ENCODE measurements at regions of chr5 and their contacts with region 1.

Region 1: DNA sequence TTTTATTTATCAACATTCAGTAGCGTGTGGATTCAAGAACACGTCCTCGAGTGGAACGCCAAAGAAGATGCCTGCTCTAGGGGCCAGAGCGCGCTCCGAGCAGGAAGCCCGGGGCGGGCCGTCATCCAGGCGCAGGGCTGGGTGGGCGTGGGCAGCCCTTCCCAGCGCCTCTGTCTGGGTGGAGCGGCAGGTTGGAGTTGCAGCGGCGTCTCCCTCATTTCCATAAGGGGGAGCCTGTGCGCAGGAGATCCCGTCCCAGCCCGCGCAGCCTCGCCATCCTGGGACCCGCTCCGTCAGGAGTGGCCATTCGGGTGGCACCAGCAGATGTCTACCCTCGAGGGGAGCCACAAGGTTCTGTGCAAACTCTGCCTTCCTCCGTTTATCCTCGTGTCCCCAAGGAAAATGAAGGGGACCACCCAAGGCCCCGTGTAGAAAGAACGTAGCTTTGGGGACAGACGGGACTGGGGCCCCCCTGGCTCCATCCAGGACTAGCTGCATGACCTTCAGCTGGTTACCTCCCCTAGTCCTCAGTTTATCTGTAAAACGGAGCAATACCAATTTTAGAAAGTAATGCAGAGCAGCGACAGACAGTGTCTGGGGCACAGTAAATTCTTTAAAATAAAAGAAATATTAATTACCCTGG is 155.5 kb upstream of the SMIM23 start:
- DNase-seq: peak; percentile 71 to 88
- ATAC-seq: peak; percentile 97 to 100
- H3K4me3 ChIP-seq: peak overlapping the region; percentile 50
- H3K27ac ChIP-seq: peak overlapping the region; percentile 44 to 45; a peak in 3 of 6 replicates
- H3K4me1 ChIP-seq: no peaks in the 10 kb centered on the region
- CTCF ChIP-seq: peak; percentile 59
- EP300 ChIP-seq: no peak
- POLR2A ChIP-seq: no peak
- RAD21 ChIP-seq: peak; percentile 78 to 81

Region 2: GRCh38 chr5:171614971-171615653 is 15.0 kb before region 1 on chr5:
- CTCF ChIA-PET with region 1: interaction called, 41 read pairs
- POLR2A ChIA-PET with region 1: no interaction called
- DNase-seq: no peak
- ATAC-seq: no peak
- H3K4me3 ChIP-seq: no peak overlapping the region
- H3K27ac ChIP-seq: no peak overlapping the region
- H3K4me1 ChIP-seq: no peaks in the 10 kb centered on the region
- CTCF ChIP-seq: no peak
- EP300 ChIP-seq: no peak
- POLR2A ChIP-seq: no peak
- RAD21 ChIP-seq: no peak

Region 3: GRCh38 chr5:171647032-171647903 is 17.1 kb after region 1 on chr5:
- CTCF ChIA-PET with region 1: interaction called, 27 read pairs
- POLR2A ChIA-PET with region 1: no interaction called
- DNase-seq: peak; percentile 45 to 55
- ATAC-seq: peak; percentile 88 to 91
- H3K4me3 ChIP-seq: no peak overlapping the region
- H3K27ac ChIP-seq: peak overlapping the region in 1 of 2 experiments; percentile 50; a peak in 2 of 6 replicates
- H3K4me1 ChIP-seq: peaks cover 7% of the 10 kb centered on the region; the same call in 1 of the 3 replicates
- CTCF ChIP-seq: no peak
- EP300 ChIP-seq: no peak
- POLR2A ChIP-seq: no peak
- RAD21 ChIP-seq: no peak

Region 4: DNA sequence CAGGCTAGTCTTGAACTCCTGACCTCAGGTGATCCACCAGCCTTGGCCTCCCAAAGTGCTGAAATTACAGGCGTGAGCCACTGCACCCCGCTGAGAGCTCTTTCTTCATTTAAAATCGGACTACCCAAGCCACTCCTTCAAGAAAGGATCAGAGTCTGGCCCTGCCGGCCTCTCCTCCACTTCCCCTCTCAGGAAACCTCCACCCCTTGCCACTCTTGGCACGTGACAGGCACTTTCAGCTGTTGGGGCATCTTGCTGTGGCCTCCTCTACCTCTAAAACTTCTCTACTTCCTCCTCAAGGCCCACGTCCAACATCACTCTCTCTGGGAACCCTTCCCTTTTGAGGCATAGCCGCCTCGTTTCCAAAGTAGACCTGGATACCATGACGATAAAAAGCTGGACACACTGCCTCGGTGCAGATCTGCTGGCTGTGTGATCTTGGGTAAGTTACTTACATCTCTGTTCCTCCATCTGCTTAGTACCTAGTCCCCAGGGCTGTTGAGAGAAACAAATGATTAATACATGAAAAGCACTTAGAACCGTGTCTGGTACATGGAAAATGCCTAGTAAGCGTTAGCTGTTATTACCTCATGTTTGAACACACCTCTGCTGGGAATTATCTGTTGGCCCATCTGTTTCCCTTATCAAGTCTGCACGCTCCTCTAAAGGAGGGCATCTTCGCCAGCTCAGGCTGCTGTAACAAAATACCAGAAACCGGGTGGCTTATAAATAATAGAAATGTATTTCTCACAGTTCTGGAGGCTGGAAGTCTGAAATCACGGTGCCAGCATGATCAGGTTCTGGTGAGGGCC is 210.8 kb after region 1 on chr5:
- CTCF ChIA-PET with region 1: interaction called, 13 read pairs
- POLR2A ChIA-PET with region 1: no interaction called
- DNase-seq: no peak
- ATAC-seq: no peak
- H3K4me3 ChIP-seq: no peak overlapping the region
- H3K27ac ChIP-seq: no peak overlapping the region
- H3K4me1 ChIP-seq: no peaks in the 10 kb centered on the region
- CTCF ChIP-seq: no peak
- EP300 ChIP-seq: no peak
- POLR2A ChIP-seq: no peak
- RAD21 ChIP-seq: no peak

Region 5: GRCh38 chr5:171898386-171898785 is 268.2 kb after region 1 on chr5:
- CTCF ChIA-PET with region 1: interaction called, 19 read pairs
- POLR2A ChIA-PET with region 1: no interaction called
- DNase-seq: no peak
- ATAC-seq: no peak
- H3K4me3 ChIP-seq: no peak overlapping the region
- H3K27ac ChIP-seq: no peak overlapping the region
- H3K4me1 ChIP-seq: no peaks in the 10 kb centered on the region
- CTCF ChIP-seq: no peak
- EP300 ChIP-seq: no peak
- POLR2A ChIP-seq: no peak
- RAD21 ChIP-seq: no peak

Region 6: GRCh38 chr5:171957591-171958251 is 327.6 kb after region 1 on chr5:
- CTCF ChIA-PET with region 1: no interaction called
- POLR2A ChIA-PET with region 1: no interaction called
- DNase-seq: no peak
- ATAC-seq: 0 out of 6 replicates have a peak, but pooled peaks of 1 of the 2 experiments have one; percentile 10
- H3K4me3 ChIP-seq: no peak overlapping the region
- H3K27ac ChIP-seq: peak overlapping the region in 1 of 2 experiments; percentile 55; a peak in 2 of 6 replicates
- H3K4me1 ChIP-seq: peaks cover 67% of the 10 kb centered on the region
- CTCF ChIP-seq: no peak
- EP300 ChIP-seq: no peak
- POLR2A ChIP-seq: no peak
- RAD21 ChIP-seq: no peak

Measured in A549 (cell line).